GM12878 (cell line): ENCODE measurements at regions of chr15 and their contacts with region 1.

Region 1: DNA sequence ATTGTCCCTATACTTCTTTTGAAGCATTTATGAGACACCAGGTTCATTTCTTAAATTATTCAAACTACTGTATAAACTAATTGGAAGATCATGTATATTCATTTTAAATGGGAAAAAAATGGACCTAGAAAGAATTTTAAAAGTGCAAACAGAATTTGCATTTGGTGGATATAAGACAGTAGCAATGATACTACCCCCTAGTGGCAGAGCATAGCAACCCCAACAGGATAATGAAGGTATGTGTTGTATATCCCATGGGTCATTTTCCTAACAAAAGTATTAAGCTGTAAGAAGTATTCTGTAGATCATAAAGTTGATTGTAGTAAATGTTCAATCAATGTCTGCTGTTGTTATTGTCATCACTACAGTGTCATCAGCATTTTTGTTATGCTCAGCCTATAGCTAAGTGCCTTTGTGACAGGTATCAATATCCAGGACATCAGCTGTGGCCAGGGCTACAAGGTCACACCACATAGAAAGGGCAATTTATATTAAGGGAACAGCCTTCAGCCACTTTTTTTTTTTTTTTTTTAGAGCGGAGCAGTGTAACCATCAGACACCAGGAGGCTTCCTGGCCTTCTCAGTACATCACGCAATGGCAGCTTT is 175.8 kb downstream of the FOXB1 start:
- DNase-seq: peak; percentile 3
- ATAC-seq: peak; percentile 68
- H3K4me3 ChIP-seq: no peak overlapping the region
- H3K27ac ChIP-seq: no peak overlapping the region
- H3K4me1 ChIP-seq: no peaks in the 10 kb centered on the region
- H3K27me3 ChIP-seq: peaks cover 0 to 4% of the 10 kb centered on the region in 2 experiments; a peak in 1 of 4 replicates
- CTCF ChIP-seq: peak; percentile 73 to 80 (median 77)
- EP300 ChIP-seq: no peak
- POLR2A ChIP-seq: no peak
- RAD21 ChIP-seq: peak; percentile 80

Region 2: GRCh38 chr15:59688841-59689625 is 490.9 kb before region 1 on chr15 and contains the start of gene BNIP2:
- CTCF ChIA-PET with region 1: interaction called, 44 read pairs
- POLR2A ChIA-PET with region 1: no interaction called
- RAD21 ChIA-PET with region 1: interaction called, 11 read pairs
- SMC1A ChIA-PET with region 1: interaction called, 12 read pairs
- in situ Hi-C with region 1: no loop called
- intact Hi-C with region 1: loop called (anchors 10 kb)
- DNase-seq: peak; percentile 92
- ATAC-seq: peak; percentile 91
- H3K4me3 ChIP-seq: peak within 1 kb of the TSS; percentile 94
- H3K27ac ChIP-seq: peak within 1 kb of the TSS; percentile 98
- H3K4me1 ChIP-seq: peaks cover 9% of the 10 kb centered on the region
- H3K27me3 ChIP-seq: no peaks in the 10 kb centered on the region
- CTCF ChIP-seq: no peak
- EP300 ChIP-seq: no peak
- POLR2A ChIP-seq: peak; percentile 90
- RAD21 ChIP-seq: no peak
- polyA plus RNA-seq, gene BNIP2: 29.9 to 58.5 TPM

Region 3: DNA sequence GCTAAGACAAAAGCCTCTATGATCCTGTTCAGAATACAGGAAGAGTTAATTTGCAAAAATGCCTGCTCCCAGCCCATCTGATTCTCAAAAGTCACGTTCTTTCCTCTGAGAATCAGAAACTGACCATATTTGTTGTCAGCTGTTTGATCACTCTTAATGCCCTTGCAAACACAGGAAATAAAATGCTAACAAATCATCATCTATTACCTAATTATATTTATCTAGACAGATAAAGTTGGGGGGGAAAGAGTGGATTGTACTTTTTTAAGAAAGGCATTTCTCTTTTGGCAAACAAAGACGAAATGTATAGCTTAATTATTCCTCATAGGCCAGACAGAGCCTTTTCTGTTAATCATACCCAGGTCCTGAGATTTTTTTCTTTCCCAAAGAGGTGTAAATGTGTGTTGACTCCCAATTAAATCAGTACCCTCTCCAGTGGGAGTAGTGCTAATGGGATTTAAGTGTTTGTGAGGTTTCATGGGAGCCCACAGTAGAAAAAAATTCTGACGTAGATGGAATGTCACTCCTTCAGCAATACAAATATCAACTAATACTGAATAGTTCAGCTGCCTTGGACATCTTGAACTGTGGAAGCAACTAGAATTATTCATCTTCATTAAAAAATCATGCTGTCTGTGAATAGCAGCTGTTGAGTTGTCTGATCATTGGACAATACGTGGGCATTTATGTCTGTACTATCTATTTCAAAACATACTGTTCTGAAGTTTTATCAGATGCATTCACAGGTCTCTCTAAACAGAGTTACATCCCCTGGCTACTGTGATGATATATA is 468.2 kb before region 1 on chr15:
- CTCF ChIA-PET with region 1: no interaction called
- POLR2A ChIA-PET with region 1: no interaction called
- RAD21 ChIA-PET with region 1: no interaction called
- SMC1A ChIA-PET with region 1: no interaction called
- in situ Hi-C with region 1: loop called (anchors 10 kb)
- intact Hi-C with region 1: no loop called
- DNase-seq: no peak
- ATAC-seq: no peak
- H3K4me3 ChIP-seq: no peak overlapping the region
- H3K27ac ChIP-seq: no peak overlapping the region
- H3K4me1 ChIP-seq: no peaks in the 10 kb centered on the region
- H3K27me3 ChIP-seq: no peaks in the 10 kb centered on the region
- CTCF ChIP-seq: no peak
- EP300 ChIP-seq: no peak
- POLR2A ChIP-seq: no peak
- RAD21 ChIP-seq: no peak